OCI-LY7 (cell line): ENCODE measurements at regions of chr4 and their contacts with region 1.

Region 1: GRCh38 chr4:20418861-20419451 is 167.3 kb downstream of the SLIT2 start:
- DNase-seq: peak; percentile 67
- H3K4me3 ChIP-seq: peak overlapping the region; percentile 30
- H3K27ac ChIP-seq: no peak overlapping the region
- H3K4me1 ChIP-seq: peaks cover 6% of the 10 kb centered on the region
- CTCF ChIP-seq: peak; percentile 85

Region 2: DNA sequence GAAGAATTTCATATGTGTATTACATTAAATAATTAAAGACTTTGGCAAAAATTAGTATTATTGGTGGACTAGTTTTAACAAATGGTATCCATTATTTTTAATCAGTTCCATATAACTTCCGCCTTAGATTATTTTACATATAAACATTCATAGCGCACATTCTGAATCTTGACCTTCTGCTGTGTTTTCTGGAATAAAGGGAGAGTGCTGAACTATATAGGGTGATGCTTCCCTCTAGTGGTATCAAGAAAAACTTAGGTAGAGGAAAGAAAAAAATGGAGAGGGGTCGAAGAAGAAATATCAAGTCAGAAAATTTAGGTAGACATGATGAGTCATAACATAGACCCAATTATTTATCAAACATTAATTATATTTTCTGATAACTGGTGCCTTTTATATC is 125.7 kb after region 1 on chr4:
- CTCF ChIA-PET with region 1: no interaction called
- POLR2A ChIA-PET with region 1: no interaction called
- intact Hi-C with region 1: loop called (anchors 5 kb)
- DNase-seq: peak; percentile 17
- H3K4me3 ChIP-seq: no peak overlapping the region
- H3K27ac ChIP-seq: no peak overlapping the region
- H3K4me1 ChIP-seq: no peaks in the 10 kb centered on the region
- CTCF ChIP-seq: peak; percentile 72